AG04450 (cell line): ENCODE measurements at regions of chr7 and their contacts with region 1.

Region 1: GRCh38 chr7:121395961-121396757 is at the start of gene FAM3C:
- DNase-seq: peak; percentile 79
- H3K4me3 ChIP-seq: peak within 1 kb of the TSS; percentile 76
- H3K27ac ChIP-seq: peak within 1 kb of the TSS; percentile 48
- H3K27me3 ChIP-seq: no peaks in the 10 kb centered on the region
- CTCF ChIP-seq: peak; percentile 70
- polyA plus RNA-seq, gene FAM3C: 33.2 and 48.7 TPM in 2 replicates

Region 2: GRCh38 chr7:121204537-121204936 is 191.6 kb before region 1 on chr7:
- CTCF ChIA-PET with region 1: no interaction called
- POLR2A ChIA-PET with region 1: no interaction called
- DNase-seq: no peak
- H3K4me3 ChIP-seq: no peak overlapping the region
- H3K27ac ChIP-seq: no peak overlapping the region
- H3K27me3 ChIP-seq: no peaks in the 10 kb centered on the region
- CTCF ChIP-seq: no peak

Region 3: GRCh38 chr7:121366852-121367431 is 29.2 kb before region 1 on chr7:
- CTCF ChIA-PET with region 1: interaction called, 97 read pairs
- POLR2A ChIA-PET with region 1: interaction called, 4 read pairs
- DNase-seq: peak; percentile 10
- H3K4me3 ChIP-seq: no peak overlapping the region
- H3K27ac ChIP-seq: no peak overlapping the region
- H3K27me3 ChIP-seq: no peaks in the 10 kb centered on the region
- CTCF ChIP-seq: peak; percentile 74

Region 4: DNA sequence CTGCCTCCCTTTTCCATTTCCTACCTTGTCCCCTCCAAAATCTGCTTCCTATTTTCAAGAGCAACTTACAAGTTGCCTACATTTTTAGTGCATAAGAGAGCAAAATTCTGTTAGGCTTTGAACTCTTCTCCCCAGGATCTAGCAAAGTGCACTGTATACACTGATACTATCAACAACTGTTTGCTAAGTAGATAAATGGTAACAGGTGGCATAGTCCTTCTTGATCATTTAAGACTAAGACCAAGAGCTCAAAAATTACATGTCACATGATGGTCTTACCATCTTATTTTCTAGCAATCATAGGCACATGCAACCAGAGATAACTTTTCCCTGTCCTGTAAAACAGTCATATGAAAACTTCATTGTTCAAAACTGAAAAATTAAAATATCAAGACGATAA is 16.2 kb before region 1 on chr7:
- CTCF ChIA-PET with region 1: interaction called, 107 read pairs
- POLR2A ChIA-PET with region 1: interaction called, 4 read pairs
- DNase-seq: no peak
- H3K4me3 ChIP-seq: no peak overlapping the region
- H3K27ac ChIP-seq: no peak overlapping the region
- H3K27me3 ChIP-seq: no peaks in the 10 kb centered on the region
- CTCF ChIP-seq: no peak

Region 5: DNA sequence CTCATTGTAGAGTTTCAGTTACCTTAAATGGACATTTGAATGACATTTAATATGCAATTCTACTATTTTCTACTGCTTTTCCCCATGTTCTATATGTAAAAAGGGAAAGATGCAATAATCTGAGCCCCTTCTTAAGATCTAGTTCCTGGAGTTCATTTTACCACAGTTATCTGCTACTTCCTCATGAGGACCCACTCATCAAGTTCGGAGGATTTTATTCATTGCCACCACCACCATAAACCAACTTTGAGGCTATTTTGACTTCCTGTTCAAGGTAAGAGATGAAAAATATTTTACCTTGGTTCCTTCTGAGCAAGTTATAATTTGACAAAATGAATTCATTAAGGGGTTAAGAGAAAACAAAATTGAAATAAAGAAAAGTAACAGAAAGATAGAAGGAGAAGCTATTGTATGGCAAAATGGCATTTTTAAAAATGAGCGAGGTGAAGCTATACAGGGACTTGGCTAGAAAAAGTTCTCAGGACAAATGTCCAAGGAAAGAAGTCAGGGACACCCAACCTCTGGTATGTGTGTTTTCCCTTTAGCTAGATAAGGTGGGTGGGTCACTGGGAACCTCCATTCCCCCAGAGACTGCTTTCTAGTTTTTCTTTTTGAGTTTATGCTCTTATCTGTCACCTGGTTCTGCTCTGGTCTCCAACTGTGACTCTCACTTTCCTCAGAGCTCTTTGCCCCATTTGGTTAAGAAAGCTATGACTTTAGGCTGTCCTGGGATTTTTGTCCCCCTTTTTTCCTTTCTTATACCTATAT is 14.9 kb after region 1 on chr7:
- CTCF ChIA-PET with region 1: interaction called, 23 read pairs
- POLR2A ChIA-PET with region 1: interaction called, 3 read pairs
- DNase-seq: no peak
- H3K4me3 ChIP-seq: no peak overlapping the region
- H3K27ac ChIP-seq: no peak overlapping the region
- H3K27me3 ChIP-seq: peaks cover 7% of the 10 kb centered on the region
- CTCF ChIP-seq: no peak

Region 6: DNA sequence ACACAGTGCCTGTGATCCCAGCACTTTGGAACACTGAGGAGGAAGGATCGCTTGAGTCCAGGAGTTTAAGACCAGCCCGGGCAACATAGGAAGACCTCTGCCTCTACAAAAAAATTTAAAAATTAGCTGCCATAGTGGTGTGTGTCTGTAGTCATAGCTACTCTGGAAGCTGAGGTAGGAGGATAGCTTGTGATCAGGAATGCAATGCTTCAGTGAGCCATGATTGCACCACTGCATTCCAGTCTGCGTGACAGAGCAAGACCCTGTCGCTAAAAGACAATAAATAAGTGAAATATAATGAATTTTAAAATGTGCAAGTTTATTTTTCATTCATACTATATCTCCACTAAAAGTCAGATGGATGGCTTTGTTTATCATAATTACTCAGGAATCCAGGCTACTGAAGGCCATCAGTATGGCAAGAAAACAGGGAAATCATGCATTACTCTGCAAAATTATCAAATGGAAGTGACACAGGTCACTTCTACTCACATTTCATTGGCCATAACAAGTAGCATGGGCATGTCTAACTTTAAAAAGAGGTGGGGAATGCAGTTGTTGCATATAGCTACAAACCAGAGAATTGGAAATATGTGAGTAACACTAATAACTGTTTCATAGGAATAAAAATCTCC is 32.8 kb after region 1 on chr7:
- CTCF ChIA-PET with region 1: interaction called, 10 read pairs
- POLR2A ChIA-PET with region 1: no interaction called
- DNase-seq: no peak
- H3K4me3 ChIP-seq: no peak overlapping the region
- H3K27ac ChIP-seq: no peak overlapping the region
- H3K27me3 ChIP-seq: no peaks in the 10 kb centered on the region
- CTCF ChIP-seq: no peak

Region 7: DNA sequence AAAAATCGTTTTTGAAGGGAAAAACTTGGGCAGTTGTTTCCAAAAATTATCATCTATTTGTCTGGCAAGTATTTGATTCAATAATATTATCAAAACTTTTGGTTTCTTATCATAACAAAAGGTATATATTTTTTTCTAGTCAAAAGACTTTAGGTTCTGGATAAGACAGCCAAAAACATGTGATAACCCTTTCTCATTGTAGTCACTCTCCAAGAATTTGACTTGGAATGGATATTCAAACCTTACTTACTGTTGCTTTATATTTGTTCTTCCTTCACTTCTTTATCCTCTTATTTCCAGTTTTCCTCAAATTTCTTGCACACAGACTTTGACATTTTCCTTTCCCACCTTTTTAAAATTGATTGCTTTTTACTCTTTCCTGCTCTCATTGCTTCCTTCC is 140.9 kb after region 1 on chr7:
- CTCF ChIA-PET with region 1: interaction called, 11 read pairs
- POLR2A ChIA-PET with region 1: no interaction called
- DNase-seq: no peak
- H3K4me3 ChIP-seq: no peak overlapping the region
- H3K27ac ChIP-seq: no peak overlapping the region
- H3K27me3 ChIP-seq: peaks cover 3% of the 10 kb centered on the region
- CTCF ChIP-seq: no peak